Activated naive CD4-positive, alpha-beta T cell treated with anti-CD3 and anti-CD28 coated beads for 36 hours (primary cell): ENCODE measurements at regions of chr22 and their contacts with region 1.

Region 1: GRCh38 chr22:26658671-26659478 is 1.5 kb downstream of the MIAT start:
- DNase-seq: peak; percentile 95
- H3K4me3 Mint-ChIP-seq: peak overlapping the region; percentile 90
- H3K27ac Mint-ChIP-seq: peak overlapping the region; percentile 80
- H3K4me1 Mint-ChIP-seq: peaks cover 26% of the 10 kb centered on the region
- H3K27me3 Mint-ChIP-seq: peaks cover 2% of the 10 kb centered on the region

Region 2: DNA sequence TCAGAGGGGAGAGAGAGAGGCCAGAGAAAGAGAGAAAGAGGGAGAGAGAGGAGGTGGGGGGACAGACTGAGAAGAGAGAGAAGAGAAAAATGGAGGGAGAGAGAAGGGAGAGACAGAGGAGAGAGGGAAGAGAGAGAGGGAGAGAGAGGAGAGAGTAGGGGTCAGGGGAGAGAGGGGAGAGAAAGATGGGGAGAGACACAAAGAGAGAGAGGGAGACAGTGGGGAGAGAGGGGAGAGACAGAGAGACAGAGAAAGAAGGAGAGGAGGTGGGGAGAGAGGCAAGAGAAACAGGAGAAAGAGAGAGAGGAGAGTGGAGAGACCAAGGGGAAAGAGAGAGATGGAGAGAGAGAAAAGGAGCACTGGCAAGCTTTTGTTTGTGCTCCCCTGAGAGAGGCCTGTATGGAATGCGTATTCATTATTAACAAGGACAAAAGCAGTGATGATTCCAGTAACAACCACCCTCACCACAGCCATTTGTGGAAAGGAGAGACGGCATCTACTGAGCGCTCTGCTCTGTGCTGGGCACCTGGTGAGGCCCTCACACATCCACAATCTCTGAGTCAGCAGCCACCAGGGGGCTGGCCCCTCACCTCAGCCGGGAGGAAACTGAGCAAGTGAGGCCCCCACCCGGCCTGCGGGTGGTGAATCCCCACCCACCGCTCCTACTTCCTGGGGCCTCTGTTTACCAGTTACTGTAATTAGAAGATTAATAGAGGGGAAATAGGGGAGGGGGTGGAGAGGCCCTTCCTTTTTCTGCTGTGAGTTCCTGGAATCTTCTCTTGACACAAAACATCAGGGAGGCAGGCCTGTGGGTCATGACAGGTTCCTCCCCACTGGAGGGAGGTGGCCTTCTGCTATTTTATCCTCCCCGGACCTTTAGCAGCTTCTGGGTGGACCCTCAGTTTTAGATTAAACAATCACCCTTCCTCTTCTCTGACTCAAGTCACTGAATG is 16.1 kb before region 1 on chr22:
- CTCF ChIA-PET with region 1: no interaction called
- intact Hi-C with region 1: loop called (anchors 1 kb)
- DNase-seq: peak; percentile 96
- H3K4me3 Mint-ChIP-seq: peak overlapping the region; percentile 60
- H3K27ac Mint-ChIP-seq: peak overlapping the region; percentile 95
- H3K4me1 Mint-ChIP-seq: peaks cover 52% of the 10 kb centered on the region
- H3K27me3 Mint-ChIP-seq: peaks cover 8% of the 10 kb centered on the region